ENCODE measurements at regions of chr1 and their contacts with region 1.

Region 1: GRCh38 chr1:181189691-181190363 is 101.3 kb downstream of the IER5 start:
- DNase-seq: peak; percentile 65

Region 2: GRCh38 chr1:181416268-181416860 is 226.5 kb after region 1 on chr1:
- in situ Hi-C with region 1: loop called (anchors 10 kb)
- DNase-seq: no peak

Region 3: DNA sequence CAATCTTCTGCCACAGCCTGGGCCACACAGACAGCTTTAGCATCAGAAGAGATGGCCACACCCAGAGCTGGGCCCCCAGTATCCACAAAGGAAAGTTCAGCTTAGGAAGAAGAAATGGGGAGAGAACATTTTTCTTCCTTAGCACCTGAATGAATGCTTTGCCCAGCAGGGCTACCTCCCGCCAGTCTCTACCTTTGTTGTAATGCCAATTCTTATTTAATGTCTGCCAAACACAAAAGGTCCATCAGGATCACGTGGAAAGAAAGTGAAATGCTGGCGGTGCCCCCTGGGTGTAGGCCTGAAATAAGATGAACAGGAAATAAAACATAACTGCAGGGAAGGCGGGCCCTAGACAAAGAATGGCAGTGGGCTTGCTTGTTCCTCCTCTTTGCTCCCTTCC is 419.1 kb after region 1 on chr1:
- in situ Hi-C with region 1: no loop called
- DNase-seq: no peak

Measured in KBM-7 (cell line).